PC-3 (cell line): ENCODE measurements at regions of chr11 and their contacts with region 1.

Region 1: GRCh38 chr11:64846998-64847666 is 2.7 kb upstream of the CDC42BPG start:
- DNase-seq: peak; percentile 99
- ATAC-seq: peak; percentile 59
- H3K4me3 ChIP-seq: no peak overlapping the region
- H3K27ac ChIP-seq: no peak overlapping the region
- H3K4me1 ChIP-seq: peaks cover 38% of the 10 kb centered on the region
- H3K27me3 ChIP-seq: no peaks in the 10 kb centered on the region
- CTCF ChIP-seq: peak; percentile 96

Region 2: GRCh38 chr11:64428693-64429092 is 418.4 kb before region 1 on chr11:
- CTCF ChIA-PET with region 1: no interaction called
- POLR2A ChIA-PET with region 1: no interaction called
- intact Hi-C with region 1: no loop called
- DNase-seq: no peak
- ATAC-seq: no peak
- H3K4me3 ChIP-seq: no peak overlapping the region
- H3K27ac ChIP-seq: no peak overlapping the region
- H3K4me1 ChIP-seq: no peaks in the 10 kb centered on the region
- H3K27me3 ChIP-seq: no peaks in the 10 kb centered on the region; the same call in 1 of the 2 replicates
- CTCF ChIP-seq: no peak

Region 3: GRCh38 chr11:64803163-64803845 is 43.8 kb before region 1 on chr11 and contains the start of gene MAP4K2:
- CTCF ChIA-PET with region 1: interaction called, 4 read pairs
- POLR2A ChIA-PET with region 1: no interaction called
- intact Hi-C with region 1: loop called (anchors 2 kb)
- DNase-seq: peak; percentile 93
- ATAC-seq: peak; percentile 88
- H3K4me3 ChIP-seq: peak within 1 kb of the TSS; percentile 79
- H3K27ac ChIP-seq: peak within 1 kb of the TSS; percentile 66
- H3K4me1 ChIP-seq: peaks cover 19% of the 10 kb centered on the region
- H3K27me3 ChIP-seq: no peaks in the 10 kb centered on the region
- CTCF ChIP-seq: peak; percentile 46
- total RNA-seq, gene MAP4K2: 55.6 and 57.0 TPM in 2 replicates

Region 4: DNA sequence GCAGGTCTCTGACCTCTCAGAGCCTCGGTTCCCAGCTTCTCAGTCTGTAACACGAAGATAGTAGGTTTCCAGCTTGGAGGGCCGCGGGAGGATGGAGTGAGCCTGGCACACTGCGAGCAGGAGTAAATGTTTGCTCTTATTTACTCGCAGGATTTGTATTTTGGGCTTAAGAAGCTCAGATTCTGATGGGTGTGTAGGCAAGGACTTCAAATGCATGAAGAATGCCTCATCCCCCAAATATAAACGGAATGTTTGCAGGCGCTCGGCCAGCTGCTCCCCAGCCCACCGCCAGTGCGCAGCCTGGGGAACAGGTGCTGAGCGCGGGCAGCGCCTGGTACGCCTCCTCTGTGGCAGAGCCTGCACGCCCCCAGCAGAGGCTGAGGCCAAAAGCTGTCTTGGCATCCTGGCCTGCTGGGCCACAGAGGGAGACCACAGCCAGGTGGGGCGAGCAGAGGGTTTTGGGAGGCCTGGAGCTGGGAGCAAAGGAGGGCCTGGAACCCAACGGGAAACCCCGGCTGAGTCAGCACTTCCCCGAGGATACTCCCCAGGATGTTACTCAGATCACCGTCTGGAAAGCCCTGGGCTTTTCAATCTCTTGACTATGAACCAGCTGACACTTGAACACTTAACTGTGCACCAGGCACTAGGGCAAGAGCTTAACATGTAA is 21.9 kb after region 1 on chr11:
- CTCF ChIA-PET with region 1: interaction called, 20 read pairs
- POLR2A ChIA-PET with region 1: interaction called, 7 read pairs
- intact Hi-C with region 1: no loop called
- DNase-seq: peak; percentile 97
- ATAC-seq: peak; percentile 78
- H3K4me3 ChIP-seq: peak overlapping the region; percentile 31
- H3K27ac ChIP-seq: peak overlapping the region; percentile 81
- H3K4me1 ChIP-seq: peaks cover 81% of the 10 kb centered on the region
- H3K27me3 ChIP-seq: no peaks in the 10 kb centered on the region
- CTCF ChIP-seq: no peak

Region 5: DNA sequence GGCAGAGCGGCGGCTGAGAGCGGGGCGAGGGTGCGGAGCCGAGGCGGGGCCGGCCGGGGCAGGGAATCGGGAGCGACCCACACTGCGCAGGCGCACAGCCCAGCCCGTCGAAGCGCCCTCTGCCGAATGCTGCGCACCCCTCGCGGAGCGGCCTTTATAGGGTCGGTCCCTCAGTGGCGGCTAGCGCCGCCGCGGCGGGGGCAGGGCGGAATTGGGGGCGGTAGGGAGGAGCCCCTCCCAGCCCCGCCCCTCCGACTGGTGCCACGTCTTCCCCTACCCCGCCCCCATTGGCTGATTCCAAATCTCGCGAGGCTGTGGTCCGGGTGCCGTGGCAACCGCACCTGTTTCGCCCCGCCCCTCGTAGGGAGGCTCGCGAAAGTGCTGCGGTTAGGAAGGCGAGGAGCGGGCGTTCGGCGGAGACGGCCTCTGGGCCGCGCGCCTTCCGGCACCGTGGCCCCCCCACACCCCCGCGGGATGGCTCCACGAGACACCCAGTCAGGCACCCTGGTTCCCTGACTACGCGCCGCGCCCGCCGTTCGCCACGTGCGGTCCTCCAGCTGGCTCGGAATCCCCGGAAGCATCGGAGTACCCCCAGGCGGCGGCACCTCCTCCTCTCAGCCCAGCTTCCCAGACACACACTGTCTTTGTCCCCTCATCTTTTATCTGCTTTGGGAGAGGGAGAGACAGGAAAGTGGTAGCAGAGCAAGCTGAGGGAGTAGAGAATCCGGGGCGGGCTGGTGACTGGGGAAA is 31.5 kb after region 1 on chr11 and contains the start of gene EHD1:
- CTCF ChIA-PET with region 1: interaction called, 6 read pairs
- POLR2A ChIA-PET with region 1: interaction called, 6 read pairs
- intact Hi-C with region 1: loop called (anchors 2 kb)
- DNase-seq: peak; percentile 100
- ATAC-seq: peak; percentile 73
- H3K4me3 ChIP-seq: peak within 1 kb of the TSS; percentile 78
- H3K27ac ChIP-seq: peak within 1 kb of the TSS; percentile 52
- H3K4me1 ChIP-seq: peaks cover 29% of the 10 kb centered on the region
- H3K27me3 ChIP-seq: no peaks in the 10 kb centered on the region
- CTCF ChIP-seq: peak; percentile 62
- total RNA-seq, gene EHD1: 340 and 370 TPM in 2 replicates

Region 6: DNA sequence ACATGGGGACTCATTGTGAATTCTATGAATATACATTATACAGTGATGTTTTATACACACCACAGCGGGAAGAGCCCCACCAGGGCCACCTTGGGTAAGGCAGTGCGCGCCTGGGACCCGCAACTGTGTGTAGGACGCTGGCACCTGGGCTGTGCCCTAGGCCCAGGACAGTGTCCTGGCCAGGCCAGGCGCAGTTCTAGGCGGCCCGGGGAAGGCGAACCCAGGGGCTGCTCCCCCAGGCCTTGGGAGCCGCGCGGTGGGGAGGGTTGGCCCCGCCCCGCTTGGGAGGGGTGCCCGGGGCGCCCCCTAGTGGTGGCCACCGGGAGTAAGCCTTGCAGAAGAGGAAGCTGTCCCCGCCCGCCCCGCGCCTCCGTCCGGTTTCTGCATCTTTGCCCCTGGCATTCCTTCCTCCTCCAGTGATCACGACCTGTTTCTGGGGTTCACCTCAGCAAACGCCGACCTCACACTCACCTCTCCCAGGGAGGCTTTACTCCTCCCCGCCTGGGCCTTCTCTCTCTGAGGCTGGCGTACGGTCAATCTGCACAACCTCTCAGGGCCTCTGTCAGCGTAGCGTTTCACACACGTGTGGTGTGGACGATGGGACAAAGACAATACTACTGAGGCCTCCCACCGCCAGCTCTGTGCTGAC is 40.7 kb after region 1 on chr11:
- CTCF ChIA-PET with region 1: interaction called, 17 read pairs
- POLR2A ChIA-PET with region 1: no interaction called
- intact Hi-C with region 1: no loop called
- DNase-seq: peak; percentile 79
- ATAC-seq: peak; percentile 82
- H3K4me3 ChIP-seq: no peak overlapping the region; the same call in 1 of the 2 replicates
- H3K27ac ChIP-seq: no peak overlapping the region
- H3K4me1 ChIP-seq: peaks cover 24% of the 10 kb centered on the region
- H3K27me3 ChIP-seq: no peaks in the 10 kb centered on the region
- CTCF ChIP-seq: peak; percentile 95

Region 7: DNA sequence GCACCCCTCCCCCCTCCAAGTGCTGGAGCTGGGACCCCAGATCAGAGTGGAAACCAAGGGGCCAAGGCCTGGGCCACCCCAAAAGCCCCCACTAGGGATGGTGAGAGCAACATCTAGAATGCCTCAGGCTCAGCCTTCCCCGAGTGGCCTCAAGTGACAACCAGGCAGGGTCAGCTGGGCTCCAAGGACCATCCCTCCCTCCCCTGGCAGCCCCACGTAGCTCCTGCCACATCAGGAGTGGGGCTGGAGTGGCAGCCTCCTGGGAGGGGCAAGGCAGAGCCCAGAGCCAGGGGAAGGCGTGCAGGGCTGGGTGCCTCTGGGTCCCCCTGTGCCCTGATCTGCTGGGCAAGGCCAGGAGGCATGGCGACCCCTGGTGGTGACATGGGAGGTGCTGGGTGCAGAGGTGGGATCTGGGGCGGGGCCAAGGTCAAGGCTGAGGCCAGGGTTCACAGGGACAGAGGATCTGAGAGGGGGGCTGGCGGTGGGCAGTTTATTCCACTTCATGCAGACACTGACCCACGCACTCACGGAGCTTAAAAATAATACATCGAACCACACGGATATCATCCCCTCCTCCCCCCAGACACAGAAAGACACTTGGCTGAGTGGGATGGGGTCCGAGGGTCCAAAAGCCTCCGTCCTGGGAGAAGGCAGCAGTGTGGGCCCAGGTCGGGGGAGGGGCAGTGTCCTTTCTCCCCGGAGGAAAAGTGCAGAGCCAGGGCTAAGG is 47.1 kb after region 1 on chr11:
- CTCF ChIA-PET with region 1: interaction called, 5 read pairs
- POLR2A ChIA-PET with region 1: no interaction called
- intact Hi-C with region 1: loop called (anchors 1 kb)
- DNase-seq: peak; percentile 83
- ATAC-seq: peak; percentile 88
- H3K4me3 ChIP-seq: no peak overlapping the region
- H3K27ac ChIP-seq: no peak overlapping the region
- H3K4me1 ChIP-seq: peaks cover under 1% of the 10 kb centered on the region; the same call in 1 of the 2 replicates
- H3K27me3 ChIP-seq: no peaks in the 10 kb centered on the region
- CTCF ChIP-seq: peak; percentile 97

Region 8: GRCh38 chr11:65003282-65003681 is 156.2 kb after region 1 on chr11:
- CTCF ChIA-PET with region 1: interaction called, 3 read pairs
- POLR2A ChIA-PET with region 1: no interaction called
- intact Hi-C with region 1: loop called (anchors 5 kb)
- DNase-seq: peak; percentile 33
- ATAC-seq: no peak
- H3K4me3 ChIP-seq: no peak overlapping the region
- H3K27ac ChIP-seq: no peak overlapping the region
- H3K4me1 ChIP-seq: peaks cover 14% of the 10 kb centered on the region
- H3K27me3 ChIP-seq: no peaks in the 10 kb centered on the region
- CTCF ChIP-seq: no peak